GM13977 (cell line): ENCODE measurements at regions of chr9 and their contacts with region 1.

Region 1: DNA sequence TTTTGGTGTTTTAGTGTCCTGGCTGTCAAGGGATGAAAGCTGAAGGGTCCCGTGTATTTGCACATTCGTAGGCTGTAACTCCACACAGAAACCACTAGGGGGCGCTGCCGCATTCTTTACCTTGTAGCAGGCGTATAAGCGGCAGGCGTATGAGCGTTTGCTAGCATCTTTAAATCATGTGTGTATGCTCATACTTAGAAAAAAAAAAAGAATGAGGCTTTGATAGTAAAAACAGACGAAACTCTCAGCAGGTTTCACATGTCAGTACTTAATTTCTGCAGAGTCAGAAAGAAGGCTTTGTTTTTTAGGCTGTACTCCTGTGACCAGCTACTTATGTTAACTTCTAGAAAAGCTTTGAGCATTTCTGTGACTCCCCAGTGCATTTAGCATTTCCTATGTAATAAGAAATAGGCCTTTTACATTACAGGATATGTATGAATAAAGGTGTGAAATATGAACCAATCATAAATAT is 218.8 kb upstream of the ADAMTSL1 start:
- DNase-seq: peak; percentile 59
- CTCF ChIP-seq: peak; percentile 83

Region 2: GRCh38 chr9:18442629-18443491 is 187.7 kb after region 1 on chr9:
- in situ Hi-C with region 1: loop called (anchors 25 kb)
- DNase-seq: peak; percentile 66
- CTCF ChIP-seq: peak; percentile 96

Region 3: GRCh38 chr9:18580151-18580550 is 325.0 kb after region 1 on chr9:
- in situ Hi-C with region 1: no loop called
- DNase-seq: no peak
- CTCF ChIP-seq: no peak

Region 4: DNA sequence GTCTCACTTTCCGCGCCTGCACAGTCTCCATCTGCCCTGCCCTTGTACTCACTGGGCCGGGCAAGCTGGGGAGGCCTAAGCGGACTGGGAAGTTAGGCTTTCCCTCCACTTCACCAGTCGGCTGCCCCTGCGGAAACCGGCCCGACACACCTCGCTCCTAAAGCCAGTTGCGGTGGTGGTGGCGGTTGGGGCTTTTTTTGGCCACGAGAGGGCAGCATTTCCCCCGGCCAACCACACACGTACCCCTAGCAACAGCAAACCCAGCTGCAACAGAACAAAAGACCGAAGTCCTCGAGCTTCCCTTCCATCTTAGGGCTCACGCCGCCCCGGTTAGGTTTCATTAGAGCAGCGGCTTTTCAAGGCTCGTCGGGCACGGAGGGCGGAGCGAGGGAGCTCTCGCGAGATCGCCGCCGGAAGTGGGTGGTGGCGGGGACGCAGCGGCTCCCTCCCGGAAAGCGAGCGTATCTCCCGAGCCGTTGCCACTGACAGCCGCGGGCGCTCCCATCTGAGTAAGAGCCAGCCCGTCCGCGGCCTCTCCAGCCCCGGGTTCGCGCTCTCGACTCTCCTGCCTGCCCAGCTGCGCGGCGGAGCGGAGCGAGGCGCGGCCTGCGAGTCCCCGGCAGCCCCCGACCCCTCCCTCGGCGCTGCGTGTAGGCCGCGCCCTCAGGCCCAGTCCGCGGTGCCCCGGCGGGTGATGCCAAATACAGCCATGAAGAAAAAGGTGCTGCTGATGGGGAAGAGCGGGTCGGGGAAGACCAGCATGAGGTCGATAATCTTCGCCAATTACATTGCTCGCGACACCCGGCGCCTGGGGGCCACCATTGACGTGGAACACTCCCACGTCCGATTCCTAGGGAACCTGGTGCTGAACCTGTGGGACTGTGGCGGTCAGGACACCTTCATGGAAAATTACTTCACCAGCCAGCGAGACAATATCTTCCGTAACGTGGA is 794.0 kb after region 1 on chr9 and contains the start of gene RRAGA:
- in situ Hi-C with region 1: loop called (anchors 25 kb)
- DNase-seq: peak; percentile 96
- CTCF ChIP-seq: peak; percentile 74